Gastrocnemius medialis (tissue), 4 donors: ENCODE measurements at regions of chr11 and their contacts with region 1.

Region 1: GRCh38 chr11:57249384-57250319 is 12.6 kb upstream of the APLNR start:
- DNase-seq: peak in 1 of 2 donors; percentile 31
- ATAC-seq: peak in 1 of 2 donors; percentile 25
- H3K4me3 ChIP-seq: no peak overlapping the region
- H3K27ac ChIP-seq: peak overlapping the region in 3 of 4 donors; percentile 38 to 52 (median 41)
- H3K4me1 ChIP-seq: peaks cover 0 to 28% of the 10 kb centered on the region in 2 donors
- H3K27me3 ChIP-seq: no peaks in the 10 kb centered on the region
- CTCF ChIP-seq: peak; percentile 73 to 86 (median 76)
- POLR2A ChIP-seq: no peak

Region 2: DNA sequence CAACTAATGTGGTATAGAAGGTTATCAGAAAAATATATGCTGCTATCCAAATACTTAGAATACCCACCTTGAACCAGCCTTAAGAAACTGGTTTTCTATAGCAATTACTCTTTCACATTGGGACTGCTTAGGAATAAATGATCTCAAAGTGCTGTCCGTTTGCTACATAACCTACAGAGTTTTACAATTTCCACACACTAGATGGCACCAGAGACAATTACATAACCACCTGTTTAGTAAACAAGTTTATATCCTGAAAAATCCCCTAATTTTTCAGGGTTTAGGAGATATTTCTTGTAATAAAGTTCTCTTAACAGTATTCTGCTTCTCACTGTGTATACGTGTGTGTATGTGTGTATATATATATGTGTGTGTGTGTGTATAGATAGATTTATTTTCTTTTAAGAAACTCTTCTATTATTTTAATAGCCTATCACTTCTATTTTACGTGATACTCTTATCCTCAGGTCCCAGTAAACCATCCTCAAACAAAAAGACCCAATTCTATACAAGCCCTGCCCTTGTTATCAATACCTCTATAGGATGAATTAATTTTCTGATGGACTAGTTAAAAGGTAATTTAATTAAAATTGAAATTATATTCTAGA is 1306.8 kb before region 1 on chr11:
- in situ Hi-C with region 1: no loop called
- intact Hi-C with region 1: loop called (anchors 5 kb)
- DNase-seq: no peak
- ATAC-seq: no peak
- H3K4me3 ChIP-seq: no peak overlapping the region
- H3K27ac ChIP-seq: no peak overlapping the region
- H3K4me1 ChIP-seq: no peaks in the 10 kb centered on the region
- H3K27me3 ChIP-seq: no peaks in the 10 kb centered on the region
- CTCF ChIP-seq: no peak
- POLR2A ChIP-seq: no peak

Region 3: GRCh38 chr11:56841210-56841810 is 408.3 kb before region 1 on chr11:
- in situ Hi-C with region 1: loop called (anchors 5 to 25 kb)
- intact Hi-C with region 1: no loop called
- DNase-seq: peak in 1 of 2 donors; percentile 17
- ATAC-seq: peak in 1 of 2 donors; percentile 64
- H3K4me3 ChIP-seq: no peak overlapping the region
- H3K27ac ChIP-seq: no peak overlapping the region
- H3K4me1 ChIP-seq: peaks cover 0 to 7% of the 10 kb centered on the region in 2 donors
- H3K27me3 ChIP-seq: no peaks in the 10 kb centered on the region
- CTCF ChIP-seq: peak; percentile 53 to 59 (median 58)
- POLR2A ChIP-seq: no peak

Region 4: GRCh38 chr11:57116654-57117053 is 133.0 kb before region 1 on chr11:
- in situ Hi-C with region 1: loop called in 1 of 4 experiments (anchors 5 kb)
- intact Hi-C with region 1: loop called (anchors 2 kb)
- DNase-seq: no peak
- ATAC-seq: peak; percentile 41 to 74
- H3K4me3 ChIP-seq: no peak overlapping the region
- H3K27ac ChIP-seq: no peak overlapping the region
- H3K4me1 ChIP-seq: peaks cover 0 to 1% of the 10 kb centered on the region in 2 donors
- H3K27me3 ChIP-seq: no peaks in the 10 kb centered on the region
- CTCF ChIP-seq: peak; percentile 41 to 55 (median 51)
- POLR2A ChIP-seq: no peak

Region 5: DNA sequence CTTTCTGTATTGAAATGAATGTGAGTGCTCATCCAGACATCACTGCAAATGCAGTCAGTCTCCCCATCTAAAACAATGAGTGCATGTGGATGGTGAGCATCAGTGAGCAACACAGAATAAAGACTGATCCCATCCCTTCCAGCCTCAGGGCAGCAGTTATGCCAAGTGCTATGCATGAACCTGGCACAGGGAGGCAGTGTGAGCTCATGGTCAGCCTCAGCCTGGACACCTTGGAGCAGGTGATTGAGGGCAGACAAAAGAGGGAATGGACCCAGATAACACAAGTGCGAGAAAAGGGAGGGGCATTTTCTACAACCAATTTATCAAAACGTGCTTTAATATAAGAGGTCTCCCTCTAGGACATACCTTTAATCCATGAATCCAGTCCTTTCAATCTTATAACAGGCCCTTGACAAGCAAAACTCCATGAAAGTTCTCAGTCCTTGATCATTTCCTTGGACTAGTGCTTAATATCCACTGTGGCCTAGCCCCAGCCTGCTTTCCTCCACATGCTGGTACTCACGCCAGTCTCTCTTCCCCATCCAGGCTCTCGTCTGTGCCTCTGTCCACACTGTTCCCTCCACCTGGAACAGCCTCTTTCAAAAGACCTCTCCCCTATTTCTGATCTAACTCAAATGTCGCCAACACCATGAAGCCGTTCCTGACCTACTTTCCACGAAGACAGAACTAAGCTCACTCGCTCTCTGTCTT is 118.4 kb before region 1 on chr11:
- in situ Hi-C with region 1: loop called in 2 of 4 experiments (anchors 5 kb)
- intact Hi-C with region 1: loop called (anchors 2 kb)
- DNase-seq: no peak
- ATAC-seq: no peak
- H3K4me3 ChIP-seq: no peak overlapping the region
- H3K27ac ChIP-seq: no peak overlapping the region
- H3K4me1 ChIP-seq: no peaks in the 10 kb centered on the region
- H3K27me3 ChIP-seq: no peaks in the 10 kb centered on the region
- CTCF ChIP-seq: peak; percentile 32 to 56 (median 52)
- POLR2A ChIP-seq: no peak

Region 6: DNA sequence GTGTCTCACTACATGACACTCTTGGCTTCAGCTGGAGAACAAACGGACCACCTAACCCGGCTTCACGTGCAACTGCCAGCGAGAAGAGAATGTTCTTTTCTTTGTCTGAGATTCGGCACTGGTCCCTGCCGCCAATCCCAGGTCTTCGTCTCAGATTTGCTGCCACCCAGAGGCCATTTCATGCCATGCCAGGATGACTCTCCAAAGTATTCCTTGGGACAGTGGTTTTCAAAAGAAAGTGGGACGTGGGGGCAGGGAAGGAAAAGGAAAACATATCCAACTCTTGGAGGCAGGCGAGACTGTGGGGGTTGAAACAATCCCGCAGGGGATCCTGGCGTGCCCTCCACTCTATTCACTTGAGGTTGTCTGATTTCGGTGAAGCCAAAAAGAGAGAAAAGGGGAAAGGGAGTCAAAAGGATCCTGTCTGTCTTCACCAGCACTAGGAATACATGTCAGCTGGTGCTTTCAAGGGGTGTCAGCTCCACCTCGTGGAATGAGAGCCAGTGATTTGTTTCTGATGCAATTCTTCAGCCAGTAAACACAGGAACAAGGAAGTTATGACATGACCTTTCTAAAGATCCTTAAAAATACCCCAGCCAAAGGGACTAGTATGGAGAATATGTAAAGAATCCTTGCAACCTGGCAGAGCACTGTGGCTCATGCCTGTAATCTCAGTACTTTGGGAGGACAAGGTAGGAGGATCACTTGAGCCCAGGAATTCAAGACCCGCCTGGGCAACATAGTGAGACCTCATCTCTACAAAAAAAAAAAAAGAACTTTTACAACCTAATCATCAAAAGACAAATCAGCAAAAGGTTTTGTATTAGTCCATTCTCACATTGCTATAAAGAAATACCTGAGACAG is 28.4 kb after region 1 on chr11:
- in situ Hi-C with region 1: no loop called
- intact Hi-C with region 1: loop called (anchors 2 kb)
- DNase-seq: peak; percentile 61 to 77
- ATAC-seq: peak; percentile 86 to 90
- H3K4me3 ChIP-seq: peak overlapping the region in 3 of 4 donors; percentile 13 to 32 (median 23)
- H3K27ac ChIP-seq: peak overlapping the region; percentile 67 to 75 (median 73)
- H3K4me1 ChIP-seq: peaks cover 16 to 22% of the 10 kb centered on the region in 2 donors
- H3K27me3 ChIP-seq: no peaks in the 10 kb centered on the region
- CTCF ChIP-seq: peak; percentile 69 to 86 (median 79)
- POLR2A ChIP-seq: no peak